CD8-positive, alpha-beta T cell (primary cell): ENCODE measurements at regions of chr7 and their contacts with region 1.

Region 1: GRCh38 chr7:1159891-1160668 is at the start of gene ZFAND2A:
- DNase-seq: peak; percentile 97 to 99 (median 99)
- ATAC-seq: peak; percentile 98
- H3K4me3 ChIP-seq: peak within 1 kb of the TSS; percentile 98
- H3K4me3 Mint-ChIP-seq: peak within 1 kb of the TSS; percentile 90
- H3K27ac ChIP-seq: peak within 1 kb of the TSS; percentile 96 to 99
- H3K27ac Mint-ChIP-seq: peak within 1 kb of the TSS; percentile 95
- H3K4me1 ChIP-seq: peaks cover 22% of the 10 kb centered on the region
- H3K4me1 Mint-ChIP-seq: peaks cover 27% of the 10 kb centered on the region
- H3K27me3 ChIP-seq: no peaks in the 10 kb centered on the region
- H3K27me3 Mint-ChIP-seq: no peaks in the 10 kb centered on the region
- CTCF ChIP-seq: no peak
- total RNA-seq, gene ZFAND2A: 100 to 105 TPM

Region 2: DNA sequence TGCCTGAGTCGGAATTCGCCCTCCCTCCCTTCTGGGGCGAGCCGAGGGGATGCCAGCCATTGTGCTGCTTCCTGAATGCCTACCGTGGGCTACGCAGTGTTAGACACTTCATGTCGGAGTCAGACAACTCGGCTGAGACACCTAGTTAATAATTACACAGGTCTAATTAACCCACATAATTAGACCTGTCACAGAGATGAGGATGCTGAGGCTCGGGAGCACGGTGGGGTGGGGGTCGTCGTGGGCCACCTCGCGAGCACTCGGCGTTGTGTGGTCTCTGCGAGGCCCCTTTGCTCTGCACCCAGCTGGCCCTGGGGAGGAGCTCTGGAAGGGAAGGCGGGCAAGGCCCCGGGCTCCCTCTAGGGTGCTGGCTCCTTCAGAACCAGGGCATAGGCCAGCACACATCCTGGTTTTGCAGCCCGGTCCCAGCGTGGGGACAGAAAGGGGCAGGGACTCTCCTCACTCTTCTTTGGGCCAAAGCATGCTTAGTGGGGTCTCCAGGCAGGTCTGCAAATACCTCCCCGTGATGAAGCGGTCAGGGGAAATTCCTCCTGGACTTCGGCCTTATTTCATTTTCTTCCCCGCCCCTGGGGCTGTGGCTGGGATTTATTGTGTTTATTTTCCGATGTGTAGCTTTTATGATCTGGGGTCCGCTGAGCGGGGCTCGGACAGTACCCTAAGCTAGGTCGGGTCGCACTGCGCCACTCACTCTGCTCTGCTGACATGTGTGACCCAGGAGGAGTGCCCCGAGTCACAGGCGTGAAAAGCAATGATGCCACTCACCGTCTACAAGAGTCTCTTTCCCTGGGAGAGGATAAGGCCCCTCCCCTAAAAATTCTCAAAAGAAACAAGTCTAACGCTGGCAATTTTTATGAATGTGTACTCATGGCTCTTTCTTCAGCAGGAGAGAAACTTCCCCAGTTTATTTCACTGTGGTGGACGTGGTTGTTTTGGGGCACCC is 875.0 kb before region 1 on chr7:
- CTCF ChIA-PET with region 1: no interaction called
- POLR2A ChIA-PET with region 1: no interaction called
- intact Hi-C with region 1: no loop called
- DNase-seq: no peak
- ATAC-seq: no peak
- H3K4me3 ChIP-seq: no peak overlapping the region
- H3K4me3 Mint-ChIP-seq: no peak overlapping the region
- H3K27ac ChIP-seq: no peak overlapping the region
- H3K27ac Mint-ChIP-seq: no peak overlapping the region
- H3K4me1 ChIP-seq: no peaks in the 10 kb centered on the region
- H3K4me1 Mint-ChIP-seq: no peaks in the 10 kb centered on the region
- H3K27me3 ChIP-seq: peaks cover 0 to 3% of the 10 kb centered on the region in 2 experiments
- H3K27me3 Mint-ChIP-seq: peaks cover 26% of the 10 kb centered on the region
- CTCF ChIP-seq: no peak

Region 3: GRCh38 chr7:711093-711921 is 448.8 kb before region 1 on chr7:
- CTCF ChIA-PET with region 1: no interaction called
- POLR2A ChIA-PET with region 1: no interaction called
- intact Hi-C with region 1: no loop called
- DNase-seq: no peak
- ATAC-seq: no peak
- H3K4me3 ChIP-seq: peak overlapping the region; percentile 23 to 40
- H3K4me3 Mint-ChIP-seq: peak overlapping the region; percentile 69
- H3K27ac ChIP-seq: no peak overlapping the region
- H3K27ac Mint-ChIP-seq: peak overlapping the region; percentile 57
- H3K4me1 ChIP-seq: peaks cover 14% of the 10 kb centered on the region
- H3K4me1 Mint-ChIP-seq: peaks cover 16% of the 10 kb centered on the region
- H3K27me3 ChIP-seq: peaks cover 0 to 5% of the 10 kb centered on the region in 2 experiments
- H3K27me3 Mint-ChIP-seq: no peaks in the 10 kb centered on the region
- CTCF ChIP-seq: no peak

Region 4: DNA sequence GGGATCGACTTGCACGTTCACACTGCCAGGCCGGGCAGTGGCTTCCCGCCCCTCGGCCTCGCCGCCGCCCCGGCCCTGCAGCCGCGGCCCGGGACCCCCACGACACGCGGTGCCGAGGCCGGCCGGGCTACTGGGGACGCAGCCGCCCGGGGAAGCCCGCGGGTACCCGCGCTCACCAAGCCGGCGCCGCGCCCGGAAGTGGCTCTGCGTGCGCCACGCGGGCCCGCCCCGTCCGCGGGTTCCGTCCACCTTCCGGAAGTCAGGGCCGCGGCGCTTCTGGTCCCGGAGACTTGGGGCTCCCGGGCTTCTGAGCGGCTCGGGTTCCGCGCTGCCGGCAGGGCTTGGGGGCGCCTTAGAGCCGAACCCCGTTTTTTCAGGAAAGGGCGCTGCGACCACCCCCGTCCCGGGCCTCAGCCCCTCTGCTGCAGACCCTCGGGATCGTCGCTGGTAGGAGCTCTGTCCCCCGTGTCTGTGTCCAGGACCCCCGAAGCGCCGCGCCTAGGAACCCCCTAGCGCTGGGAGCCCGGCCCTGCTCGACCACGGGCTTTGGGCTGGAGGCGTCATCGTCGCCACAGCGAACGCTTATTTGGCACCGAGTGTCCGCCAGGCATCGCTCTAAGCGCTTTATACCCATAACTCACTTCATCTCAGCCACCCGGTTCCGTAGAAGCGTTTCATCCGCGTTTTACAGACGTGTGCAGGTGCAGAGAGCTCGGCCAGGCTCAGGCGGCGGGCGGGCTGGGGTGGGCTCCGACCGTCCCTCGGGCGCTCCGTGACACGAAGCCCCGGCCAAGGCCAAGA is 410.0 kb after region 1 on chr7 and contains the start of gene PSMG3:
- CTCF ChIA-PET with region 1: no interaction called
- POLR2A ChIA-PET with region 1: no interaction called
- intact Hi-C with region 1: loop called in 1 of 2 experiments (anchors 1 kb)
- DNase-seq: peak; percentile 77 to 93 (median 88)
- ATAC-seq: peak; percentile 87
- H3K4me3 ChIP-seq: peak within 1 kb of the TSS; percentile 64 to 95
- H3K4me3 Mint-ChIP-seq: peak within 1 kb of the TSS; percentile 87
- H3K27ac ChIP-seq: peak within 1 kb of the TSS; percentile 69 to 90
- H3K27ac Mint-ChIP-seq: peak within 1 kb of the TSS; percentile 91
- H3K4me1 ChIP-seq: peaks cover 16% of the 10 kb centered on the region
- H3K4me1 Mint-ChIP-seq: peaks cover 29% of the 10 kb centered on the region
- H3K27me3 ChIP-seq: no peaks in the 10 kb centered on the region
- H3K27me3 Mint-ChIP-seq: no peaks in the 10 kb centered on the region
- CTCF ChIP-seq: no peak
- total RNA-seq, gene PSMG3: 20.9 to 21.0 TPM